CD4-positive, alpha-beta memory T cell (primary cell): ENCODE measurements at regions of chr3 and their contacts with region 1.

Region 1: DNA sequence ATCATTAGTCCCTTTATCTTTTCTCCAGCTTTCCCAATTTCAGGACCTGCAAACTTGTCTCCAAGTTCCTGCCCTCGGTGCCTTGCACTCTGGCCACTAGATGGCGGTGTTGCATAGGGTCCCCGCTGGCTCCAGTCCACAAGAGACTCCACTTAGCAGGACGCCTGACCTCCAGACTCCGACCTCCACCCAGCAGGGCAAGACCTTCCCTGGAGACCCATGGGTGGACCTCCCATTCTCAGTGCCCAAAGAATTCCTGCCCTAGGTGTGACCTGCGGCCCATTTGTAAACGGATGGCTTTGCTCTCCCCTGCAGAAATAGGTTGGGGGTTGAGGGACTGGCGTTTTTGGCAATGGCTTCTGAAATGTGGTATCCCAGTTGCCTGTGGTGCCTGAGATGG is 82.6 kb downstream of the LSM3 start:
- DNase-seq: peak; percentile 54 to 65 (median 64)
- H3K4me3 ChIP-seq: no peak overlapping the region
- H3K4me3 Mint-ChIP-seq: no peak overlapping the region
- H3K27ac ChIP-seq: no peak overlapping the region
- H3K27ac Mint-ChIP-seq: no peak overlapping the region
- H3K4me1 ChIP-seq: no peaks in the 10 kb centered on the region
- H3K4me1 Mint-ChIP-seq: peaks cover 0 to 2% (median under 1%) of the 10 kb centered on the region in 4 donors
- H3K27me3 ChIP-seq: no peaks in the 10 kb centered on the region
- H3K27me3 Mint-ChIP-seq: peaks cover 0 to 6% of the 10 kb centered on the region in 2 donors

Region 2: DNA sequence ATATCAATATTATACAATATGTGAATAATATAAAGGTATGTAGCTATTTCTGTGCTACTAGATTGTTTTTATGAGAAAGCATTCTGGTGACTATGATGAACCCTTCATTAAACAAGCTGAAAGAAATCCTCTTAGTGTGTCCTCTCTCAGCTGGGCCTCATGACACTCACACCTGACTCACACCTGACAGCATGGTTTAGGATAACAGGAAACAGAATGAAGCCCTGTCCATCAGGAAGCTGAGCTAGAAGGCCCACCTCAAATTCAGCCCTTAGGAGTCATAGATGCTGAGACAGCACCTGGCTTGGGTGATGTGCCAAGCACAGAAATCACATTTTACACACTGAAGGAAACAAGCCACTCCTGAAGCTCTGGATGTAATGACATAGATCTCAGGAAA is 167.4 kb before region 1 on chr3:
- CTCF ChIA-PET with region 1: no interaction called
- POLR2A ChIA-PET with region 1: no interaction called
- intact Hi-C with region 1: no loop called
- DNase-seq: no peak
- H3K4me3 ChIP-seq: no peak overlapping the region
- H3K4me3 Mint-ChIP-seq: no peak overlapping the region
- H3K27ac ChIP-seq: no peak overlapping the region
- H3K27ac Mint-ChIP-seq: peak overlapping the region in 1 of 7 donors; percentile 53
- H3K4me1 ChIP-seq: no peaks in the 10 kb centered on the region
- H3K4me1 Mint-ChIP-seq: no peaks in the 10 kb centered on the region
- H3K27me3 ChIP-seq: no peaks in the 10 kb centered on the region
- H3K27me3 Mint-ChIP-seq: peaks cover 19 to 25% of the 10 kb centered on the region in 2 donors

Region 3: GRCh38 chr3:14274999-14275961 is 14.1 kb after region 1 on chr3:
- CTCF ChIA-PET with region 1: interaction called, 10 read pairs
- POLR2A ChIA-PET with region 1: no interaction called
- intact Hi-C with region 1: no loop called
- DNase-seq: no peak
- H3K4me3 ChIP-seq: no peak overlapping the region
- H3K4me3 Mint-ChIP-seq: no peak overlapping the region
- H3K27ac ChIP-seq: no peak overlapping the region
- H3K27ac Mint-ChIP-seq: no peak overlapping the region
- H3K4me1 ChIP-seq: no peaks in the 10 kb centered on the region
- H3K4me1 Mint-ChIP-seq: no peaks in the 10 kb centered on the region
- H3K27me3 ChIP-seq: no peaks in the 10 kb centered on the region
- H3K27me3 Mint-ChIP-seq: peaks cover 0 to 2% of the 10 kb centered on the region in 2 donors

Region 4: DNA sequence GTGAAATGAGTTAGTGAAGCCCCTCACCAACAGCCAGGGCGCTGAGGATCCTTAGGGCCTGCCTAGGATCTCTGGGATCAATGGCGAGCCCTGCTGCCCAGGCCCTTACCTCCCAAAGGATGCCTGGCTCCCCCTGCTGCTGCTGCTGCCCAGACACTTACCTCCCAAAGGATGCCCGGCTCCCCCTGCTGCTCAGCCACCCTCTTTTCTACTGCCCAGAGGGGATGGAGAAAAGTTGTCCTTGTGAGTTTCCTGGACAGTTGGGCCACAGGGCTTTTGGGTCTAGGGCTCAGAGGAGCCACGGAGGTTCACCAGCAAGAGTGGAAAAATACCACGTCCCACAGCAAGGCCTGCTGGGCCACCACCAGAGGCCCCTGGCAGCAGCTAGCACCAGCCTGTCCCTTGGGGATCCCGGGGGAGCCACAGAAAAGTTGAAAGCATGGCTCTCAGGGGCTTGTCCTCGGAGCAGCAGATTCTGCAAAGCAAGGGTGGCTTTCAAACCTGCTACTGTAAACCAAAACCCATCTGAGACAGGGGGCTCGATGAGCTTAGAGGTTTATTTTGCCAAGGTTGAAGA is 200.6 kb after region 1 on chr3:
- CTCF ChIA-PET with region 1: interaction called, 67 read pairs
- POLR2A ChIA-PET with region 1: interaction called, 3 read pairs
- intact Hi-C with region 1: loop called (anchors 1 kb)
- DNase-seq: peak in 4 of 5 donors; percentile 30 to 38 (median 32)
- H3K4me3 ChIP-seq: no peak overlapping the region
- H3K4me3 Mint-ChIP-seq: no peak overlapping the region
- H3K27ac ChIP-seq: no peak overlapping the region
- H3K27ac Mint-ChIP-seq: peak overlapping the region in 3 of 7 donors; percentile 23 to 73 (median 41)
- H3K4me1 ChIP-seq: no peaks in the 10 kb centered on the region
- H3K4me1 Mint-ChIP-seq: peaks cover 0 to 5% (median 3%) of the 10 kb centered on the region in 4 donors
- H3K27me3 ChIP-seq: no peaks in the 10 kb centered on the region
- H3K27me3 Mint-ChIP-seq: no peaks in the 10 kb centered on the region

Region 5: DNA sequence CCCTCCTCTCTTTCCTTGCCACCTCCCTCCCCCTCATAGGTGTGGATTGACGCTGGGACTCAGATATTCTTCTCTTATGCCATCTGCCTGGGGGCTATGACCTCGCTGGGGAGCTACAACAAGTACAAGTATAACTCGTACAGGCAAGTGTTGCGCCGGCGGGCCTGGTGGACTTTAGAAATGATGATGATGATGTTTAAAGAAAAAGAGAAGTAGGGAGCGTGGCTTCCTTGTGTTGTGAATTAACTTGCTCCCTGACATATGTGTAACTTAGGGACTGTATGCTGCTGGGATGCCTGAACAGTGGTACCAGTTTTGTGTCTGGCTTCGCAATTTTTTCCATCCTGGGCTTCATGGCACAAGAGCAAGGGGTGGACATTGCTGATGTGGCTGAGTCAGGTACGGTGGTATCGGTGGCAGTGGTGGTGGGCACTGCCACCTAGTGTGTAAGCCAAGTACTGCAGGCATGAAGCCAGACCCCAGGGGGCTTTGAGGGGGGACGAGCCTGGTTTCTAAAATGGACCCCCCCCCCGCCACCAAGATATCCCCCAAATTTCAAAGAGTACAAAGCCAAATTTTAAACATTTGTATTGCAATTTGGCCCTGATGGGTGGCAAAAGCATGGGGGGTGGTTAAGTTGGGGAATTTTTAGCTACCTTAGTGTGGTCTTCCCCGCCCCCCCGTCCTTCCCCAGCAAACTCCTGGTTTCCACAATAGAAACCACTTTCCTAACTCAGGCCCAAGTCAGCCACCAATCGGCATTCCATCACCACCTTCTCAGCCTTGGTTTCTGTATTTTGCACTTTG is 206.8 kb after region 1 on chr3:
- CTCF ChIA-PET with region 1: interaction called, 67 read pairs
- POLR2A ChIA-PET with region 1: no interaction called
- intact Hi-C with region 1: loop called (anchors 1 kb)
- DNase-seq: peak in 4 of 5 donors; percentile 26 to 42 (median 36)
- H3K4me3 ChIP-seq: no peak overlapping the region
- H3K4me3 Mint-ChIP-seq: no peak overlapping the region
- H3K27ac ChIP-seq: no peak overlapping the region
- H3K27ac Mint-ChIP-seq: peak overlapping the region in 4 of 7 donors; percentile 36 to 81 (median 54)
- H3K4me1 ChIP-seq: no peaks in the 10 kb centered on the region
- H3K4me1 Mint-ChIP-seq: peaks cover 0 to 2% (median 0%) of the 10 kb centered on the region in 4 donors
- H3K27me3 ChIP-seq: no peaks in the 10 kb centered on the region
- H3K27me3 Mint-ChIP-seq: no peaks in the 10 kb centered on the region

Region 6: GRCh38 chr3:14548321-14548729 is 287.1 kb after region 1 on chr3:
- CTCF ChIA-PET with region 1: interaction called, 9 read pairs
- POLR2A ChIA-PET with region 1: no interaction called
- intact Hi-C with region 1: loop called (anchors 1 kb)
- DNase-seq: peak; percentile 14 to 33 (median 28)
- H3K4me3 ChIP-seq: no peak overlapping the region
- H3K4me3 Mint-ChIP-seq: no peak overlapping the region
- H3K27ac ChIP-seq: no peak overlapping the region
- H3K27ac Mint-ChIP-seq: no peak overlapping the region
- H3K4me1 ChIP-seq: no peaks in the 10 kb centered on the region
- H3K4me1 Mint-ChIP-seq: peaks cover 0 to 4% (median 2%) of the 10 kb centered on the region in 4 donors
- H3K27me3 ChIP-seq: no peaks in the 10 kb centered on the region
- H3K27me3 Mint-ChIP-seq: peaks cover 16 to 29% of the 10 kb centered on the region in 2 donors